T-cell (primary cell): ENCODE measurements at regions of chr5 and their contacts with region 1.

Region 1: GRCh38 chr5:126354012-126354857 is 69.0 kb upstream of the GRAMD2B start:
- DNase-seq: peak in 2 of 35 experiments; percentile 1 to 69
- ATAC-seq: peak in 3 of 4 experiments; percentile 53 to 67 (median 64)
- H3K4me3 ChIP-seq: peak overlapping the region in 1 of 2 donors; percentile 48
- H3K4me3 Mint-ChIP-seq: peak overlapping the region; percentile 22 to 68 (median 41)
- H3K27ac ChIP-seq: no peak overlapping the region
- H3K27ac Mint-ChIP-seq: peak overlapping the region in 1 of 2 donors; percentile 11
- H3K4me1 ChIP-seq: peaks cover 2 to 7% of the 10 kb centered on the region in 2 experiments
- H3K4me1 Mint-ChIP-seq: peaks cover 13 to 18% (median 14%) of the 10 kb centered on the region in 3 donors
- H3K27me3 ChIP-seq: no peaks in the 10 kb centered on the region
- H3K27me3 Mint-ChIP-seq: peaks cover 0 to 2% of the 10 kb centered on the region in 2 donors

Region 2: GRCh38 chr5:126536874-126537273 is 182.6 kb after region 1 on chr5:
- CTCF ChIA-PET with region 1: interaction called, 38 to 76 read pairs
- POLR2A ChIA-PET with region 1: no interaction called
- DNase-seq: no peak
- ATAC-seq: no peak
- H3K4me3 ChIP-seq: no peak overlapping the region
- H3K4me3 Mint-ChIP-seq: no peak overlapping the region
- H3K27ac ChIP-seq: no peak overlapping the region
- H3K27ac Mint-ChIP-seq: no peak overlapping the region
- H3K4me1 ChIP-seq: no peaks in the 10 kb centered on the region
- H3K4me1 Mint-ChIP-seq: no peaks in the 10 kb centered on the region
- H3K27me3 ChIP-seq: peaks cover 0 to 3% of the 10 kb centered on the region in 2 experiments
- H3K27me3 Mint-ChIP-seq: no peaks in the 10 kb centered on the region